Activated T-helper 1 cell treated with anti-CD3 and anti-CD28 coated beads, Interleukin-12 subunit alpha, Interleukin-12 subunit beta, Interleukin-2, Interleukin-4 antibody, amounts not matched to agents 30 ng/mL and 10 ng/mL and 1 ng/mL, durations not matched to agents 14 hours and 24 hours and 36 hours (primary cell): ENCODE measurements at regions of chr4 and their contacts with region 1.

Region 1: GRCh38 chr4:145808021-145808650 is 128.2 kb downstream of the C4orf51 start:
- DNase-seq: peak; percentile 56
- H3K4me3 Mint-ChIP-seq: peak overlapping the region; percentile 49
- H3K27ac Mint-ChIP-seq: peak overlapping the region; percentile 96
- H3K4me1 Mint-ChIP-seq: peaks cover 47% of the 10 kb centered on the region
- H3K27me3 Mint-ChIP-seq: no peaks in the 10 kb centered on the region

Region 2: GRCh38 chr4:145481164-145481941 is 326.8 kb before region 1 on chr4 and contains the start of gene SMAD1:
- intact Hi-C with region 1: loop called (anchors 1 kb)
- DNase-seq: peak; percentile 11
- H3K4me3 Mint-ChIP-seq: peak within 1 kb of the TSS; percentile 73
- H3K27ac Mint-ChIP-seq: peak within 1 kb of the TSS; percentile 49
- H3K4me1 Mint-ChIP-seq: peaks cover 6% of the 10 kb centered on the region
- H3K27me3 Mint-ChIP-seq: peaks cover 33% of the 10 kb centered on the region
- total RNA-seq, gene SMAD1: 3.1 and 3.2 TPM in 2 replicates

Region 3: DNA sequence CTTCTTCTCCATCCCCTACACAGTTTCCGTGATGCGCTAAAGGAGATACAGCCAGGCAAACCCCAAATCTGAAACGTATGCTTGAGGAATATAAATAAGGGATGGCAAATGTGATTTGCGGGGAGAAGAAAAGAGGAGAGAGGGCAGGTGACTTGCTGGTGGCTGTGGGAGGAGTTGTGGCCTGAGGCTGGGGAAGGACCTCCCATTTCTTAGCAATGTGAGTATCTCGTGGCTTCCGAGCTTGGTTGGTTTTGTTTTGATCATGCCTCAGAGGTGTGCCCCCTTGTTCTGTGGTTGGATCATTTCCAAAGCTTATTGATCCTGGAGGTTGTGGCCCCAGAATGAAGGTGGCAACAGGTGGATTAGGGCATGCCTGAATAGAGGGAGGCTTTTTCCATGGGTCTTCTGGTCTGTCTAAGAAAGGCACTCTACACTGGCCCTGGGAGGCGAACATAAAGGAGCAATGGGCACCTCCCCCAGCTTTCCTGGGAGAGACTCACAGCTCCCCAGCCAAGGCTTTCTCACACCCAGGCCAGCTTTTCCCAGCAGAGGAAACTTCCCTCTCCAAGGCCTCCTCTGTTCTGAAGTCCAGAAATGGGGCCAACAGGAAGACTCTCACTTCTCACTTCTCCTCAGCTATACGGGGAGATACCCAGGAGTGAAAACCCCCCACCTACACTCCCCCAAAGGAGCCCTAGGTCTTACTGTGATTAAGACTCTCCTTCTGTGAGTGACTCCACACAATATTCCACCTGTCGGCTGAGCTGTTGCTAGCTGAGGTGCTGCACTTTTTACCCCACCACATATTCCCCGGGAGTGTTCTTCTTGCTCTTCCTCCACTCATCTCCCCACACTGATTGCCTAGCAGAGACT is 88.1 kb before region 1 on chr4:
- intact Hi-C with region 1: loop called (anchors 1 kb)
- DNase-seq: no peak
- H3K4me3 Mint-ChIP-seq: no peak overlapping the region
- H3K27ac Mint-ChIP-seq: peak overlapping the region; percentile 13
- H3K4me1 Mint-ChIP-seq: peaks cover 15% of the 10 kb centered on the region
- H3K27me3 Mint-ChIP-seq: peaks cover 2% of the 10 kb centered on the region

Region 4: DNA sequence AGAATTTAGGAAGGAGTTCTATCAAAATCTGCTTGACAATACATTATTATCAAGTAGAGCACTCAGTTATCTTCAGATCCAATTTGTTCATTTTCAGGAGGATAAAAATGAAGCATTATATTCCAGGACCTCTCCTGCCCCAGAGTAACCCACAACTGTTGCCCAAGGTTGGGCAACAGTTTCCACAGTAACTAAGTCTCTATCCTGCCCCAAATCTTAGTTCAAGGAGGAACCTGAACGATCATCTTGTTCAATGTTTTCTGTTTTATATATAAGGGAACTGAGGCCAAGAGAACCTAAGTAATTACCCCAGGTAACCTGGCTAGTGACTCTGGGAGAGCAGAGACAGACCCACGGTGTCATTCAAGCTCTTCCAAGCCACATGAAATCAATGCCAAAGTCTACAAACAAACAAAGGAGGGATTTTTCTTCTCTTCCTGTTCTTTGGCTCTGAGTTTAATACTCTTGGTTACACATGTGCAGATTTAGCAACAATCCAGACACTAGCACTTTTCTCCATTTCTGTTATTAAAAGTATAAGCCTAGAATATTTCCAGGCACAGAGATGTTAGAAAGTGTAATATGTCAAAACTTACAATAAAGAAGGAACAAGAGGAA is 22.6 kb before region 1 on chr4:
- intact Hi-C with region 1: loop called (anchors 1 kb)
- DNase-seq: no peak
- H3K4me3 Mint-ChIP-seq: no peak overlapping the region
- H3K27ac Mint-ChIP-seq: peak overlapping the region; percentile 72
- H3K4me1 Mint-ChIP-seq: peaks cover 49% of the 10 kb centered on the region
- H3K27me3 Mint-ChIP-seq: no peaks in the 10 kb centered on the region

Region 5: DNA sequence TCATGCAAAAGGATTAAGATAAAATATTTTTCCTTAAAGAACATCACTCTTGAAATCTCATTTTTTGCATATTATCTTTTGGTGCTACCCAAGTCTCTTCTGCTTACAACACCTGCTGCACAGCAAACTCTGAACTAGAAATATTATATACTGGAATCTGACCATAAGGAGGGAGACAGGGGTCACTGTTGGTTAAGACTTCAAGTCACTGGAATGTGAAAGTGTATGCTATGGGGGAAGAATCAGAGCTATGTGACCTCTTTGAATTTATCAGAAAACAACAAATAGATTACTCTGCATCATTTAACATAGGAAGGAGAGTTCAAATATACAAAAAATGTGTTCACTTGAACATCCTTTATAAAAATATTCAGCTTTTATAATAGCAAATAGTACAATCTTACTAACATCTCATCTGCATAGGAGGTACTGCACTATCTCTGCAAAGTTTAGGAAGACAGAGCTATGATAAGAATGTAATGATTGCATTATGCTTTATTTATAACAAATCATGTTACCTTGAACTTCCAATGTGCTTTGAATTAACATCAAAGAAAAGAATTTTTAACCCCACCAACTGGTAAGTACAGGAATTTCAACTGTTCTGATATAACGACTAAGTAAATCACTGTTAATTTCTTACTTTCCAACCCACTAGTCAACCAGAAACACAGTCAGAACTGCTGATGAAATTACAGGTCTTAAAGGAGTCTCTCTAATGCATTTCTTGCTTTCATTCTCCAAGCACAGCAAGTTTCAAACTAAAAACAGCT is 60.7 kb after region 1 on chr4:
- intact Hi-C with region 1: loop called (anchors 1 kb)
- DNase-seq: no peak
- H3K4me3 Mint-ChIP-seq: no peak overlapping the region
- H3K27ac Mint-ChIP-seq: no peak overlapping the region
- H3K4me1 Mint-ChIP-seq: peaks cover 39% of the 10 kb centered on the region
- H3K27me3 Mint-ChIP-seq: no peaks in the 10 kb centered on the region

Region 6: GRCh38 chr4:146243141-146243882 is 435.2 kb after region 1 on chr4:
- intact Hi-C with region 1: loop called (anchors 1 kb)
- DNase-seq: peak; percentile 16
- H3K4me3 Mint-ChIP-seq: peak overlapping the region; percentile 16
- H3K27ac Mint-ChIP-seq: peak overlapping the region; percentile 84
- H3K4me1 Mint-ChIP-seq: peaks cover 35% of the 10 kb centered on the region
- H3K27me3 Mint-ChIP-seq: peaks cover 5% of the 10 kb centered on the region

Region 7: DNA sequence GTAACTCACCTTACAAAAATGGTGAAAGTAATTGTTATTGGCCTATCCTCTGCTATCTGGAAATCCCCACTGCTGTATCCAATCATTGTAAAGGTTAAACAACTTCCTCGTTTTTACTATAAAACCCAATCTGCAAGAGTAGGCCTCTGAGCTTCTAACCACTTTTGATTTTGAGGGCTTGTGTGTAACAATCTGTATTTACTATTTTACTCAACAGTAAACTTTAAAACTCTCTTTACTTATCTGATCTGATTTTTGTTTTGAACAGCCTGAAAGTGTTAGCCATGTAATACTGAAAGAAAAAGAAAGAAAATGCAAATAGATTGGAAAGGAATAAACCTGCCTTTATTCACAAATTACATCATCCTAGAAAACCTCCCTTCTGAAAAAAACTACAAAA is 650.5 kb after region 1 on chr4:
- intact Hi-C with region 1: loop called (anchors 2 kb)
- DNase-seq: no peak
- H3K4me3 Mint-ChIP-seq: peak overlapping the region; percentile 63
- H3K27ac Mint-ChIP-seq: peak overlapping the region; percentile 88
- H3K4me1 Mint-ChIP-seq: peaks cover 26% of the 10 kb centered on the region
- H3K27me3 Mint-ChIP-seq: no peaks in the 10 kb centered on the region